Left cardiac atrium (tissue), 4 donors: ENCODE measurements at regions of chr6 and their contacts with region 1.

Region 1: DNA sequence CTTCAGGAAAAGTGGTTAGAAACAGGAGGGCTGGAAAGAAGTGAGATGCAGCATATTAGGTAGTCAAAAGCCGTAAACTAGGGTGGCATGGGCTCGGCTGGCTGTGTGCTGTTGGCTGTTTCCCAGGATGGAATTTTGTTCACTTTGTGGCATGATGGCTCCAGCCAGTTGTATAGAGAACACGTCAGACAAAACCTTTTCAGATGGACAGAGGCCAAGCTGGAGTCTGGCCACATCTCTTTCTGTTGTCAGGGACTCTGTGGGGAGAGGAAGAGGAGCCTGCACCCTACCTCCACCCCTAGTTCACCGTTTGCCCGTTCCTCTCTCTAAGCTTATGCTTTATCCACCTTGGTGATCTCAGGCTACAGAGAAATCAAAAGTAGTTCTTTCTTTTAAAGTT is 22.0 kb downstream of the C6orf89 start:
- DNase-seq: peak; percentile 66
- ATAC-seq: peak; percentile 70 to 93

Region 2: DNA sequence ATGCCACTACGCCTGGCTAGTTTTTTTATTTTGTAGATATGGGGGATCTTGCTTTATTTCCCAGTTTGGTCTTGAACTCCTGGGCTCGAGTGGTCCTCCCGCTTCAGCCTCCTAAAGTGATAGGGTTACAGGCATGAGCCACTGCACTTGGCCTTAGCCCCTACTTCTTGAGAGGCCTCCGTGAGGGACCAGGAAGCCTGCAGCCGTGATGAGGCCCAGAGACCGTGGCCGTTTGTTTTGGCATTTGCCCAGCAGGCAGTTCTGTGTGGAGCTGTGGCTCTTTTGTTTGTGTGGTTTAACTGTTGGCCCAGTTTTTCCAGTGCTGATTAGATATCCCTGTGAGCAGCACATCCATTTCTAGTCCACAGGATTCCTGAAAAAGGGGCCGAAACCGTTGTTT is 273.9 kb before region 1 on chr6:
- intact Hi-C with region 1: no loop called
- DNase-seq: peak; percentile 89
- ATAC-seq: peak; percentile 83 to 84

Region 3: GRCh38 chr6:36839749-36840431 is 67.9 kb before region 1 on chr6:
- intact Hi-C with region 1: no loop called
- DNase-seq: peak; percentile 75
- ATAC-seq: peak; percentile 46 to 69

Region 4: DNA sequence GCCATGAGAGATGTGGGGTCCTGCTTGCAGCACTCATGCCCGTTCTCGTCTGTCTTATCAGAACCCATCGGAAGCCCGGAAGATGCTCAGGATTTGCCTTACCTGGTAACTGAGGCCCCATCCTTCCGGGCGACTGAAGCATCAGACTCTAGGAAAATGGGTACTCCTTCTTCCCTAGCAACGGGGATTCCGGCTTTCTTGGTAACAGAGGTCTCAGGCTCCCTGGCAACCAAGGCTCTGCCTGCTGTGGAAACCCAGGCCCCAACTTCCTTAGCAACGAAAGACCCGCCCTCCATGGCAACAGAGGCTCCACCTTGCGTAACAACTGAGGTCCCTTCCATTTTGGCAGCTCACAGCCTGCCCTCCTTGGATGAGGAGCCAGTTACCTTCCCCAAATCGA is 55.1 kb after region 1 on chr6:
- intact Hi-C with region 1: loop called in 1 of 2 experiments (anchors 10 kb)
- DNase-seq: peak; percentile 65
- ATAC-seq: peak; percentile 20 to 35

Region 5: DNA sequence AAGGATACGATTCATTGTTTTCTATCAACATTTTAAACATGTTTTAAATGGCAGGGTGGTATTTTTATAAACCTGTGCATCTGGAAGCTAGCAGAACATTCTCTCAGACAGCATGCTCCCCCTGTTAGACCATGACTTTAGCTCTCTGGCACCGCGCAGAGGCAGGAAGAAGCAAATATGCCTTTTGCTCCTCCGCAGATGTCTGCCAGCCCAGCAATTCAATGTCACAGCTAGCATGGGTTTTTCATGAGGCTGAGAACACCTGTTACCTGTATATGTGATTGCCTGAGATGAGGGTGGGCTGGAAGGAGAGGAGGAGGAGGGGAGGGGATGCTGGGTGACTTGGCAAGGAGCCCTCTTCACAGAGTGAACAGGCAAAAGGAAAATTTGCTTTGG is 71.6 kb after region 1 on chr6:
- intact Hi-C with region 1: loop called in 1 of 2 experiments (anchors 5 kb)
- DNase-seq: no peak
- ATAC-seq: peak; percentile 59 to 67